ENCODE measurements at regions of chr9 and their contacts with region 1.

Region 1: DNA sequence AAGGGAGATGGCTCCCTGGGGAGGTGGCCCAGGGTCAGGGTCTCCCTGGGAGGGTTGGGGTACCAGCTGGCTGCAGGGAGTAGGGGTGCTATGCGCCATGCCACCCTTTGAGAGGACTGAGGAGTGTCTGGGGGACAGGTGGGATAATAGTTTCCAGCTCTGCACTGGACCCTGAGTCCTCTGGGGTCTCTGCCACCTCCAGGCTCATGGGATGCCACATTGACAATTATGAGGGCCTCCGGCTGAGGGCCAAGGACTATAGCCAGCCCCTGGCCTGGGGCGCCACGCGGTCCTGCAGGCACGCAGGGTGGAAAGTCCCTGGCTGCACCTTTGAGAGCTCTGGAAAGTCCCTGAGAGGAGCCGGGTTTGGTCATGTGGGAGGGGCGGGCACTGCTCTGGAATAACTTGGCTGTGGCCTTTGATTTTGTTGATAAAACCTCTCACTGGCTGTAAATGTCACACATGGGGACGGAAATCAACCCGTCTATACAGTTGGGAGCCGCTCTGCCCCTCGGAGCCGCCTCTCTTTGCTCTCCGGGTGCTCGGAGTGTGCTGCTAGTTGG is 16.0 kb downstream of the TRAF2 start:
- DNase-seq: peak; percentile 95
- H3K4me3 Mint-ChIP-seq: peak overlapping the region; percentile 31
- H3K27ac Mint-ChIP-seq: peak overlapping the region; percentile 94
- H3K4me1 Mint-ChIP-seq: peaks cover 52% of the 10 kb centered on the region
- H3K27me3 Mint-ChIP-seq: no peaks in the 10 kb centered on the region

Region 2: DNA sequence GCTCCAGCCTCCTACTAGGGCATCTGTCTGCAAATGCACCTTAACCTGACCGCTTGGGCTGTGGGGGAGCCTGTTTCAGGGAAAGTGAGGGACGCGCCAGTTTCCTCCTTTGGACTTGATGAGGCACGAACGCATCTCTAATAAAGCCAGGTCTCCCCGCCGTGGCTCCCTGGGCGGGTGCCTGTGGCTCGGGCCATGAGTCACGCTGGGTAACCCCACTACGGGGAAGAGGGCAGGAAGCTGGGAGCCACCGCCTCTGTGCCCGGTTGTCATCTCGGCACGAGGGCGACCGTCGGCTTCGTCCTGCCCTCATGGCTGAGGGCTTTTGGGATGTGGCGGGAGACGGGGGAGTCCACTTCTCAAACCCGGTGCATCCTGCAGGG is 368.6 kb before region 1 on chr9:
- CTCF ChIA-PET with region 1: no interaction called
- intact Hi-C with region 1: loop called (anchors 5 kb)
- DNase-seq: peak; percentile 94
- H3K4me3 Mint-ChIP-seq: peak overlapping the region; percentile 57
- H3K27ac Mint-ChIP-seq: peak overlapping the region; percentile 91
- H3K4me1 Mint-ChIP-seq: peaks cover 73% of the 10 kb centered on the region
- H3K27me3 Mint-ChIP-seq: no peaks in the 10 kb centered on the region

Region 3: GRCh38 chr9:136849038-136849959 is 53.0 kb before region 1 on chr9 and contains the start of gene PHPT1:
- CTCF ChIA-PET with region 1: no interaction called
- intact Hi-C with region 1: loop called (anchors 1 kb)
- DNase-seq: peak; percentile 99
- H3K4me3 Mint-ChIP-seq: peak within 1 kb of the TSS; percentile 93
- H3K27ac Mint-ChIP-seq: peak within 1 kb of the TSS; percentile 95
- H3K4me1 Mint-ChIP-seq: peaks cover 14% of the 10 kb centered on the region
- H3K27me3 Mint-ChIP-seq: peaks cover 18% of the 10 kb centered on the region
- total RNA-seq, gene PHPT1: 110 to 116 TPM

Region 4: DNA sequence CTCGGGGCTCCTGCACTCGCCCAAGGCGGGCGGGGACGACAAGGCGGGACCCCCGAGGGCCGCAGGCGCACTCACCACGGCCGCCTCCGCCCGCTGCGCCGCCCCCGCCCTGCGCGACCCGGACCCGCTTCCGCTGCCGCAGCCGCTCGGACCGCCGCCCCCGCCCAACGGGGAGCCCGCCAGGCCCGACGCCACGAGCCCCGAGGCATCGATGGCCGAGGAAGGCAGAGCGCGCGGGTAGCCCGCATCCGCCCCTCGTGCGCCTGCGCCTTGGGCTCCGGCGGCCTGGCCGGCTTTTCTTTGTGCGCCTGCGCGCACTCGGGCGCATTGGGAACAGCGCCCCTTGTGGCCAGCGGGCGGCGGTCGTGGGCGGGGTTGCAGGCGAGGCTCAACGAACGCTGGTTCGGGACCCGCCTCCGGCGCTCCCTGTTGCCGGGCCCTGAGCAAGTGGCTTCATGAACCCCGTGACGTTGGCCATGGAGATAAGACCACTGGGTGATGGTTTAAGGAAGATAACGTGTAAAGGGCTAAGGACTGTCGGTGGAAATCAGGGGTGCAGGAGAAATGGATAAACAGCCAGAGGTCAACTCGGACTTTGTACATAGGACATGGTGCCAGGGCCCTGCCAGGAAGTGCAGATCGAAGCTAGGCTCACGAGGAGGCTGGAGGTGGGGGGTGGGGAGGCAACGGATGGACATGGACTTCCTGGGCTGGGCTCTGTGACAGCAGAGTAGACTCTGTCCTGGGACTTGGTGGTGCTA is 42.4 kb after region 1 on chr9 and contains the starts of genes C8G and FBXW5:
- CTCF ChIA-PET with region 1: no interaction called
- intact Hi-C with region 1: loop called (anchors 1 kb)
- DNase-seq: peak; percentile 94
- H3K4me3 Mint-ChIP-seq: peak within 1 kb of the TSS; percentile 77
- H3K27ac Mint-ChIP-seq: peak within 1 kb of the TSS; percentile 81
- H3K4me1 Mint-ChIP-seq: peaks cover 9% of the 10 kb centered on the region
- H3K27me3 Mint-ChIP-seq: no peaks in the 10 kb centered on the region
- total RNA-seq, gene C8G: 0.83 TPM in 1 of 2 experiments, not detected in the other
- total RNA-seq, gene FBXW5: 44.0 to 47.8 TPM

Region 5: GRCh38 chr9:136991993-136992818 is 89.9 kb after region 1 on chr9 and contains the start of gene PAXX:
- CTCF ChIA-PET with region 1: no interaction called
- intact Hi-C with region 1: loop called (anchors 5 kb)
- DNase-seq: peak; percentile 95
- H3K4me3 Mint-ChIP-seq: peak within 1 kb of the TSS; percentile 83
- H3K27ac Mint-ChIP-seq: peak within 1 kb of the TSS; percentile 81
- H3K4me1 Mint-ChIP-seq: peaks cover 16% of the 10 kb centered on the region
- H3K27me3 Mint-ChIP-seq: peaks cover under 1% of the 10 kb centered on the region
- total RNA-seq, gene PAXX: 75.9 to 76.8 TPM

Measured in activated naive CD4-positive, alpha-beta T cell treated with anti-CD3 and anti-CD28 coated beads for 36 hours (primary cell).